ENCODE measurements at regions of chr3 and their contacts with region 1.

Region 1: DNA sequence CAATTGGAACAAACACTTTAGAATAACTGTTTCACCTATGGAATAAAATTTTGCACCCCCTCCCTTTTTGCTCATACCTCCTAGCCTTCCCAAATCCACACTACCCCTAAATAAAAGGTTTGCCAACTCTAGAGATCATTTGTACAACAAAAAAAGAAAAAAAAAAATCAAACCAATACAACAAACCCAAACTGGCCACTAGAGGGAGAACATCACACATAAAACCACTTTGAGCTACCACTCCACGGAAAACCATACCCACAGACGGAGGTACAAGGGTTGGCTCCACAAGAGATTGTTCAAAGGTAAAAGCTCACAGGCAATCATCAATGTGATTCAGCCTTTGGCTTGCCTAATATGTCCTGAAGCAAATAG is 47.6 kb downstream of the SETMAR start:
- DNase-seq: peak; percentile 70
- CTCF ChIP-seq: peak; percentile 63

Region 2: GRCh38 chr3:4644951-4645350 is 294.2 kb after region 1 on chr3:
- in situ Hi-C with region 1: loop called (anchors 10 kb)
- DNase-seq: no peak
- CTCF ChIP-seq: no peak